ENCODE measurements at regions of chr17 and their contacts with region 1.

Region 1: GRCh38 chr17:29807520-29808351 is 122.3 kb downstream of the SSH2 start:
- DNase-seq: peak; percentile 57 to 75 (median 66)
- H3K4me3 ChIP-seq: peak overlapping the region; percentile 45 to 75 (median 48)
- H3K4me3 Mint-ChIP-seq: peak overlapping the region; percentile 75 to 89
- H3K27ac ChIP-seq: peak overlapping the region; percentile 16 to 78
- H3K27ac Mint-ChIP-seq: peak overlapping the region; percentile 79 to 90 (median 85)
- H3K4me1 ChIP-seq: peaks cover 6 to 12% of the 10 kb centered on the region in 2 donors
- H3K4me1 Mint-ChIP-seq: peaks cover 16% of the 10 kb centered on the region
- H3K27me3 ChIP-seq: no peaks in the 10 kb centered on the region
- H3K27me3 Mint-ChIP-seq: peaks cover 0 to 2% (median 0%) of the 10 kb centered on the region in 3 donors
- CTCF ChIP-seq: peak; percentile 94

Region 2: DNA sequence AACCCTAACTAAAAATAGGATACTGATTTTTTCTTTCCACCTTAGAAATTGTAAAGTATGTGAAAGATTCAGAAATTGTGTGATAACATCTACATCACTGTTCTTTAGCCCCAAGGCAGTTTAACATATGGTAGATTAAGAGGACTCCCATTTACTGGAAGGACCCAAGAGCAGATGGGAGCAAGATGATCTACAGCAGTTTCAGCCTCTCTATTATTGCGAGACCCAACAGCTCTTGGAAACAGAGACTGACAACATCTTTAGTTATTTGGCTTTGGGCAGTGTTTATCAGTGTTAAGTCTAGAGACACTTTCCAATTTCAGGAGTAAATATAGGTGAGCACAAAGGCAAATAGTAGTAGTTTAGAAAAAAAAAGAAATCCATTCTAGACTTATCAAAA is 60.1 kb before region 1 on chr17:
- intact Hi-C with region 1: no loop called
- DNase-seq: no peak
- H3K4me3 ChIP-seq: no peak overlapping the region
- H3K4me3 Mint-ChIP-seq: no peak overlapping the region
- H3K27ac ChIP-seq: peak overlapping the region in 1 of 2 donors; percentile 35
- H3K27ac Mint-ChIP-seq: peak overlapping the region in 3 of 7 donors; percentile 25 to 58 (median 48)
- H3K4me1 ChIP-seq: peaks cover 6 to 8% of the 10 kb centered on the region in 2 donors
- H3K4me1 Mint-ChIP-seq: peaks cover 26% of the 10 kb centered on the region
- H3K27me3 ChIP-seq: no peaks in the 10 kb centered on the region
- H3K27me3 Mint-ChIP-seq: no peaks in the 10 kb centered on the region
- CTCF ChIP-seq: no peak

Region 3: DNA sequence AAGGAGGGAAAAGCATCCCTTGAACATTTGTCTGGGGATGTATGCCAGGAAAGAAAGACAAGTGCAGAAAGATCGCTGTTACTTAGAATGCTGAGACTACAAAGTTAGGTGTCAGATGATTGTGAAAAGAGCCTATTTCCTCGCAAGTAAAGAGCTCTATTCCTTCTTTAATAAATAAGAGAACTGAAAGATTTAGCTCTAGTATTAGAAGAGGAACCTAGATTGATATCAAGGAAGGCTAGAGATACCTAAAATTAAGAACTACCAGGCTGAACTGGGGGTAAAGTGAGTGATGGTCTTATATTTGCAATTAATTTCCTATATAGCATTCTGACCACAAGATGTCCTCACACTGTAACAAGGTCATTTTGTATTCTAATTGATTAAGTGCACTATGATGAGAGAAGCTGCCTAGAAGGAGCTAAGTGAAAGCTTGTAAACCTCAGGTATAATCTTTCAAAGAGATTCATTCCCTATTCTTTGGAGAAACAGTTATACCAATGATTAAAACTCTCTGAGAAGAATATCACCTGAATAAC is 60.0 kb after region 1 on chr17:
- intact Hi-C with region 1: loop called in 1 of 2 experiments (anchors 10 kb)
- DNase-seq: peak in 1 of 3 donors; percentile 4
- H3K4me3 ChIP-seq: no peak overlapping the region
- H3K4me3 Mint-ChIP-seq: no peak overlapping the region
- H3K27ac ChIP-seq: peak overlapping the region in 1 of 2 donors; percentile 25
- H3K27ac Mint-ChIP-seq: peak overlapping the region in 1 of 7 donors; percentile 19
- H3K4me1 ChIP-seq: peaks cover 9 to 10% of the 10 kb centered on the region in 2 donors
- H3K4me1 Mint-ChIP-seq: peaks cover 31% of the 10 kb centered on the region
- H3K27me3 ChIP-seq: no peaks in the 10 kb centered on the region
- H3K27me3 Mint-ChIP-seq: no peaks in the 10 kb centered on the region
- CTCF ChIP-seq: no peak

Region 4: DNA sequence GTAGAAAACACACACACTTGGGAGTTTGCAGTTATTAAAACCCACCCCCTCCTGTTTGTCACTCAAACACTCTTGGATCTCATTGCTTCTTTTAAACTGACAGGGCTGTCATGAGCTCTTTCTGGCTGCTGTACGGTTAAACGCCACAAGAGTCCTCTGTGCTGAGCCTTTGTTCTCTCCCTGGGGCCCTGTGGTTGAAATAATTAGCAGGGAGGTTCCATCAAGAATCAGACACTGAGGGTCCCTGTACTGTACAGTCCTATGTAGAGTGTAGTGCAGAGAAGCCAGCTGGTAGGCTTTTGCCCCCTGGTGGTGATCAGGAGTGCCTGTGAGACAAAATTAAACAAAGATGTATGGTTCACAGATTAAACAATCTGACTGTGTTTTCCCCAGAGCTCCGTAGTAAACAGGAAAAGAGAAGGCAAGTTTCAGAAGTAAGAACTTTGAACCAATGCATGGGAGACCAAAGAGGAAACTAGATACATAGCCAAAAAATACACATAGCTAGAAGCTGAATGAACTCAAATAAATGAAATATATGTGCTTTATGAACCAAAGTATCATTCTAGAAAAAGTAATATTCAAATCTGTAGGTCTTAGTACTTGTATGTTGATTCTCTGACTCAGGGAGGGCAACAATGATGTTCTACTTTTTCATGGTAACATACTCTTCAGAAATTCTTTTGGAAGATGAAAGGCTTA is 123.6 kb after region 1 on chr17:
- intact Hi-C with region 1: loop called (anchors 1 to 5 kb)
- DNase-seq: peak; percentile 52 to 84 (median 75)
- H3K4me3 ChIP-seq: peak overlapping the region; percentile 72 to 92 (median 91)
- H3K4me3 Mint-ChIP-seq: no peak overlapping the region
- H3K27ac ChIP-seq: no peak overlapping the region
- H3K27ac Mint-ChIP-seq: no peak overlapping the region
- H3K4me1 ChIP-seq: peaks cover 23 to 32% of the 10 kb centered on the region in 2 donors
- H3K4me1 Mint-ChIP-seq: peaks cover 25% of the 10 kb centered on the region
- H3K27me3 ChIP-seq: no peaks in the 10 kb centered on the region
- H3K27me3 Mint-ChIP-seq: peaks cover 0 to 5% (median 0%) of the 10 kb centered on the region in 3 donors
- CTCF ChIP-seq: peak; percentile 94

Region 5: DNA sequence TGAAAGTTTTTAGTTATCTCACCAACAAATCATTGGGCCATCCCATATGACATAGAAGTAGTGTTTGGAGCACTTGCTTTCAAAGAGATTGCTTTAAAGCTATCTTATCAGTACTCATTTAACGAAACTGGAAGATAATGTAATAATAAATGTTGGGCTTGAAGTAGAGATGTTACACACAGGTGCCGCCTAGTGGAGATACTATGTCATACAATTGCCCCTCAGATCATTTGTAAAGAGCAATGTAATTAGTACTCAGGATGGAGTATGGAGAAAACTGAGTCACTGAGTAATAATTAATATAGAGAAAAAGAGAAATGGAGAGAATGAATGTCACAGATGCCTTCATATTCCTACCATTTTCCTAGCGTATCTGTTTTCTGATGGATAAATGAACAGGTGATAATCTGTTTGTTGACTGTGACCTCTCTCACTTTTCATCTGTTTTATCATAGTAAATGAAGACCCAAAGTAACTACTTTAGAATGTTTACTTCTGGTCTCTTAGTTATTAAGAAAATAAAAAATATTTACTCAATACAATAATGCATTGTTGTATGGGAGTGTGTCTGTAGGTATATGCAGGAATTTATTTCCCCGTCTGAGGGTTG is 214.1 kb after region 1 on chr17:
- intact Hi-C with region 1: loop called (anchors 10 kb)
- DNase-seq: peak; percentile 22 to 58 (median 47)
- H3K4me3 ChIP-seq: no peak overlapping the region
- H3K4me3 Mint-ChIP-seq: no peak overlapping the region
- H3K27ac ChIP-seq: no peak overlapping the region
- H3K27ac Mint-ChIP-seq: no peak overlapping the region
- H3K4me1 ChIP-seq: no peaks in the 10 kb centered on the region
- H3K4me1 Mint-ChIP-seq: no peaks in the 10 kb centered on the region
- H3K27me3 ChIP-seq: no peaks in the 10 kb centered on the region
- H3K27me3 Mint-ChIP-seq: peaks cover 0 to 2% (median 2%) of the 10 kb centered on the region in 3 donors
- CTCF ChIP-seq: peak; percentile 93

Region 6: GRCh38 chr17:30093463-30094147 is 285.9 kb after region 1 on chr17:
- intact Hi-C with region 1: loop called in 1 of 2 experiments (anchors 5 kb)
- DNase-seq: peak; percentile 41 to 66 (median 53)
- H3K4me3 ChIP-seq: no peak overlapping the region
- H3K4me3 Mint-ChIP-seq: no peak overlapping the region
- H3K27ac ChIP-seq: no peak overlapping the region
- H3K27ac Mint-ChIP-seq: no peak overlapping the region
- H3K4me1 ChIP-seq: peaks cover 0 to 3% of the 10 kb centered on the region in 2 donors
- H3K4me1 Mint-ChIP-seq: peaks cover 11% of the 10 kb centered on the region
- H3K27me3 ChIP-seq: no peaks in the 10 kb centered on the region
- H3K27me3 Mint-ChIP-seq: peaks cover 0 to 6% (median 0%) of the 10 kb centered on the region in 3 donors
- CTCF ChIP-seq: peak; percentile 90